ENCODE measurements at regions of chr18 and their contacts with region 1.

Region 1: GRCh38 chr18:6677086-6677485 is 52.4 kb upstream of the ARHGAP28 start:
- DNase-seq: no peak
- ATAC-seq: no peak
- H3K4me3 ChIP-seq: no peak overlapping the region
- H3K27ac ChIP-seq: no peak overlapping the region
- H3K4me1 ChIP-seq: no peaks in the 10 kb centered on the region
- H3K27me3 ChIP-seq: no peaks in the 10 kb centered on the region
- CTCF ChIP-seq: no peak

Region 2: DNA sequence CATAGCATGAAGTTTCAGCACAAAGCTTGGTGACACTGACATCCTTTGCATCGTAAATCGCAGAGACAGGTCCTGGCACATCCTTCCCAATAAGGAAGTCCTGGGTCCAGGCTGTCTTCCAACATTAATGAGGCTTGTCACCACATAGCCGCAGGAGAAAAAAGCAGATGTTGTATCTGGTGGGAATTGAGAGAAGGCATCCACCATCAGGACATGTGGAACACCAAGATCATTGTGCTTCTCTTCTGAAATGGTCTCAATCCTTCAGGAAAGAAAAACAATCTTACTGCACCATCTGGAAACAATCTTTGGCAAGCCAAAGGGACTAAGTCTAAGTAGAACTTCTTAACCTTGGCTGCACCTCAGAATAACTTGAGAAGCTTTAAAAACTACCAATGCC is 66.6 kb before region 1 on chr18:
- intact Hi-C with region 1: loop called in 1 of 10 experiments (anchors 10 kb)
- DNase-seq: no peak
- ATAC-seq: peak in 2 of 8 donors; percentile 42 to 47
- H3K4me3 ChIP-seq: no peak overlapping the region
- H3K27ac ChIP-seq: no peak overlapping the region
- H3K4me1 ChIP-seq: no peaks in the 10 kb centered on the region
- H3K27me3 ChIP-seq: no peaks in the 10 kb centered on the region
- CTCF ChIP-seq: no peak